ENCODE measurements at regions of chr15 and their contacts with region 1.

Region 1: DNA sequence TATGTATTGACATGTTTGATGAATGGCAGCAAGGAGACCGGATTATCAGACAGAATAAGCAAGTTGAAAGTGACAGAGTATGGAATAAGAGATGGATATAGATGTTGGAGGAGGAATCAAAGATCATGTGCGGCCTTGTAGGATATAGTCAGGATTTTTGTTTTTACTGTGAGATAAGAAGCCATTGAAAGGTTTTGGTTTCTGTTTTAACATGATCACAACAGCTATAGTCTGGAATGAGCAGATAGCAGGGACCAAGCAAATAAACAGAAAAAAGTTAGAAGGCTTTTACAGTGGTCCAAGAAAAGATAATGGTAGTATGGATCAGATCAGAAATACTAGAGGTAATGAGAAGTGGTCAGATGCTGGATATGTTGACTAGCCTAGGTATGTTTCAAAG is 52.6 kb downstream of the SLC12A6 start:
- DNase-seq: no peak
- ATAC-seq: no peak
- H3K4me3 ChIP-seq: no peak overlapping the region
- H3K27ac ChIP-seq: no peak overlapping the region
- H3K4me1 ChIP-seq: no peaks in the 10 kb centered on the region
- CTCF ChIP-seq: no peak
- EP300 ChIP-seq: no peak
- POLR2A ChIP-seq: no peak
- RAD21 ChIP-seq: no peak

Region 2: DNA sequence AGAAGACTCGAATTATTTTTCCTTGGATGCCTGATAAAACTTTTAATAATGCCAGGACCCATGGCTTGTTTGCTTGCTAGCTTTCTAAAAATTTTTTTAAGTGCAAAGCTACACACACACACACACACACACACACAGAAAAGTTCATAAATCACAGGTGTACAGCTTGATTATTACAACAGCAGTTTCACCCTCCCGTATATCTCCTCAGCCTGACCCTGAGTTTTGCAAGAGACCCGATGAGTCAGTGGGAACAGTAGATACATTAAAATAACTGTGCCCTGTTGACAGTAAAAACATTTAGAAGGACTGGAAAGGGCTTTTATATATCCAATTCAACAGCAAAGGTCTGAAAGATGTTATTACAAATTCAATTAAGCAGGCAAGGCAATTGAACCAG is 13.4 kb before region 1 on chr15:
- CTCF ChIA-PET with region 1: interaction called, 10 read pairs
- POLR2A ChIA-PET with region 1: no interaction called
- DNase-seq: peak in 1 of 2 experiments; percentile 52
- ATAC-seq: peak; percentile 42 to 73; a peak in 2 of 6 replicates
- H3K4me3 ChIP-seq: no peak overlapping the region
- H3K27ac ChIP-seq: peak overlapping the region in 1 of 2 experiments; percentile 18; a peak in 1 of 6 replicates
- H3K4me1 ChIP-seq: peaks cover 35% of the 10 kb centered on the region
- CTCF ChIP-seq: no peak
- EP300 ChIP-seq: no peak
- POLR2A ChIP-seq: no peak
- RAD21 ChIP-seq: no peak

Region 3: DNA sequence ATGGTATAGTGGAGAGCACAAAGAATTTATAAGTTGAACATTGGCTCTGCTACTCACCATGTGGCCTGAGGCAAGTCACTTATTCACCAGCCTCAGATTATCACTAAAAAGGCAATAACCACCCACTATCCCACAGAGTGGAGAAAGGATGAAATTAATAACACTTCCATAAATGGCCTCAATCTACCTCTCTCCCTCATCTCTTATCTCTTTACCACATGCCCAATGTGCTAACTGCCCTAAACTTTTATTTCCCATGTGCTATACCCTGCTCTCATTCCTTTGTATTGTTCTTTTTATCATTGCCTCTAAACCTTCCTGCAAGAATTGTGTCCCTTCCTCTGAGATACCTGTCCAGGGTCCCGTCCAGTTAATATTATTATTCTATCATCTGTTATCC is 26.6 kb after region 1 on chr15:
- CTCF ChIA-PET with region 1: no interaction called
- POLR2A ChIA-PET with region 1: no interaction called
- DNase-seq: no peak
- ATAC-seq: no peak
- H3K4me3 ChIP-seq: no peak overlapping the region
- H3K27ac ChIP-seq: no peak overlapping the region
- H3K4me1 ChIP-seq: no peaks in the 10 kb centered on the region
- CTCF ChIP-seq: no peak
- EP300 ChIP-seq: no peak
- POLR2A ChIP-seq: no peak
- RAD21 ChIP-seq: no peak

Region 4: GRCh38 chr15:34472947-34473346 is 188.0 kb after region 1 on chr15:
- CTCF ChIA-PET with region 1: no interaction called
- POLR2A ChIA-PET with region 1: no interaction called
- DNase-seq: no peak
- ATAC-seq: no peak
- H3K4me3 ChIP-seq: no peak overlapping the region
- H3K27ac ChIP-seq: no peak overlapping the region
- H3K4me1 ChIP-seq: no peaks in the 10 kb centered on the region
- CTCF ChIP-seq: no peak
- EP300 ChIP-seq: no peak
- POLR2A ChIP-seq: no peak
- RAD21 ChIP-seq: no peak